Activated CD4-positive, alpha-beta T cell treated with anti-CD3 and anti-CD28 coated beads, Interleukin-2, amount 10 ng/mL, durations not matched to agents 24 days and 14 days (primary cell): ENCODE measurements at regions of chr15 and their contacts with region 1.

Region 1: DNA sequence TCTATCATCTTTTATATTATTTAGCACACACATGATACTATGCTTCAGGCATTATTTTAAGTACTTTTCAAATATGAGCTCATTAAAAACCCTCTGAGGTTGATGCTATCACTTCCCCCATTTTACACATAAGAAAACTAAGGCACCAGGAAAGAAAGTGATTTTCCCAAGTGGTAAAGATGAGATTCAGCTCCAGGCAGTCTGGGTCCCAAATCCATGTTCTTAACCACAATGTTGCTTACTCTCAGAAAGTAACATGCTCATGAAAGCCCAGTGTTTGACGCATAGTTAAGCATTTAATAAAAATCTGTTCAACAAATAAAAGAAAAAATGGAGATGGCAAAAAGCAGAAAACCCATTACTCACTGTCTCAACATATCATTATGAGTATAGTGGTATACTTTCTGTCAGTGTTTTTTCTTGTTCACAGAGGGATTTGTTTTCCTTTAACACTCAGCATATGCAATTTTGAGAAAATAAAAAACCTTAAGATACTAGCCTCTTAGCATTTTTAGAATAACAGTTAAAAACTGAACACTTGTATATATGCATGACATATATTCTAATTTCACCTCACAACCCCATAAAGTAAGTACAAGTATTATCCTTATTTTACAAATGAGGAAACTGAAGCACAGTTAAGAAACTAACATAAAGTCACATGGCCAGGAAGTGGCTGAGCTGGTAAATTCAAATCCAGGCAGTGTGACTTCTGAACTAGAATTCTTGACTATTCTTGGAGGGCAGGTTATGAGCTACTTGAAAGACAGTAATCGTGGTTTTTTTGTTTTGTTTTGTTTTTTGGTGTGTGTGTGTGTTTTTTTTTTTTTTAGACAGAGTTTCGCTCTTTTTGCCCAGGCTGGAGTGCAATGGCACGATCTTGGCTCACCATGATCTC is 10.4 kb downstream of the PEAK1 start:
- DNase-seq: peak; percentile 84
- H3K4me3 Mint-ChIP-seq: peak overlapping the region; percentile 59
- H3K27ac Mint-ChIP-seq: peak overlapping the region; percentile 71
- H3K4me1 Mint-ChIP-seq: peaks cover 45% of the 10 kb centered on the region
- H3K27me3 Mint-ChIP-seq: no peaks in the 10 kb centered on the region

Region 2: GRCh38 chr15:77376772-77377171 is 32.7 kb before region 1 on chr15:
- intact Hi-C with region 1: no loop called
- DNase-seq: no peak
- H3K4me3 Mint-ChIP-seq: no peak overlapping the region
- H3K27ac Mint-ChIP-seq: no peak overlapping the region
- H3K4me1 Mint-ChIP-seq: peaks cover 6% of the 10 kb centered on the region
- H3K27me3 Mint-ChIP-seq: no peaks in the 10 kb centered on the region

Region 3: DNA sequence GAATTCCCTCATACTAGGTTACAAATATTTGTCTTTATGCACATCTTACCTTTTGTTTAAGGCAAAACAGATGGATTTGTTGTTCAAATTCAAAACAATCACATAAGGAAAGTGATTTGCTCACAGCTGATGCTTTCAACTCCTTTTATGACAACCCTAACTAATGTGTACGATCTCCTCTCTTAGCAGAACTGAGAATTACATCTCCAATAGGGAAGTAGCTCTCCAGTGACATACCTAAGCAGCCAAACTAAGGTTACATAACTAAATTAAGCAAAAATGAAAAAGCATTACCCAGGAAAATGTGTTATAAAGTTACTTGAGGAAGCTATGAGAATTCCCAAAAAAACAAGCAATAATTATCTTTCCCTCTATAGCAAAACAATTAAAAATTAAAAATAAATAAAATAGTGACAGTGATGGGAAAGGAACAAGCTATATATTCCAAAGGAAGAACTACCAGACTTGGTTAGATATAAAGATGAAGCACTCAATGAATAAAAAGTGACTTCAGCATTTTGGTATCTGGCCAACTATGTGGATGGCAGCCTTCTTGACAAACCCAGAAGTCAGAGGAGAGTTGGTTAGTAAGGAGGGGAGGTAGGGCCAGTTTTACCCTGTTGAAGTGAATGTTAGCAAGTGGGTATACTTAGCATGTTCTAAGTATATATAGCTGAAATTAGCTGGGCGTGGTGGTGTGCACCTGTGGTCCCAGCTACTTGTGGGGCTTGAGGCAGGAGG is 22.0 kb before region 1 on chr15:
- intact Hi-C with region 1: no loop called
- DNase-seq: no peak
- H3K4me3 Mint-ChIP-seq: no peak overlapping the region
- H3K27ac Mint-ChIP-seq: no peak overlapping the region
- H3K4me1 Mint-ChIP-seq: peaks cover 13% of the 10 kb centered on the region
- H3K27me3 Mint-ChIP-seq: no peaks in the 10 kb centered on the region

Region 4: GRCh38 chr15:77419836-77420609 is 10.5 kb after region 1 on chr15 and contains the start of gene PEAK1:
- intact Hi-C with region 1: loop called (anchors 1 kb)
- DNase-seq: peak; percentile 100
- H3K4me3 Mint-ChIP-seq: peak within 1 kb of the TSS; percentile 96
- H3K27ac Mint-ChIP-seq: peak within 1 kb of the TSS; percentile 94
- H3K4me1 Mint-ChIP-seq: peaks cover 29% of the 10 kb centered on the region
- H3K27me3 Mint-ChIP-seq: no peaks in the 10 kb centered on the region
- total RNA-seq, gene PEAK1: 25.9 and 28.2 TPM in 2 replicates

Region 5: GRCh38 chr15:77430213-77430612 is 20.7 kb after region 1 on chr15:
- intact Hi-C with region 1: no loop called
- DNase-seq: no peak
- H3K4me3 Mint-ChIP-seq: no peak overlapping the region
- H3K27ac Mint-ChIP-seq: peak overlapping the region; percentile 30
- H3K4me1 Mint-ChIP-seq: peaks cover 27% of the 10 kb centered on the region
- H3K27me3 Mint-ChIP-seq: no peaks in the 10 kb centered on the region